ENCODE measurements at regions of chr9 and their contacts with region 1.

Region 1: GRCh38 chr9:124309665-124310064 is 51.9 kb downstream of the NEK6 start:
- DNase-seq: no peak
- H3K4me3 ChIP-seq: no peak overlapping the region
- H3K27ac ChIP-seq: no peak overlapping the region
- H3K4me1 ChIP-seq: no peaks in the 10 kb centered on the region
- H3K27me3 ChIP-seq: no peaks in the 10 kb centered on the region
- CTCF ChIP-seq: no peak
- EP300 ChIP-seq: no peak
- POLR2A ChIP-seq: no peak

Region 2: GRCh38 chr9:122918310-122918709 is 1391.4 kb before region 1 on chr9:
- in situ Hi-C with region 1: no loop called
- intact Hi-C with region 1: loop called (anchors 5 kb)
- DNase-seq: no peak
- H3K4me3 ChIP-seq: no peak overlapping the region
- H3K27ac ChIP-seq: no peak overlapping the region
- H3K4me1 ChIP-seq: peaks cover 0 to 4% (median 2%) of the 10 kb centered on the region in 4 donors
- H3K27me3 ChIP-seq: no peaks in the 10 kb centered on the region
- CTCF ChIP-seq: no peak
- EP300 ChIP-seq: no peak
- POLR2A ChIP-seq: no peak

Region 3: GRCh38 chr9:124126571-124127289 is 182.9 kb before region 1 on chr9:
- in situ Hi-C with region 1: loop called (anchors 10 kb)
- intact Hi-C with region 1: no loop called
- DNase-seq: peak; percentile 80
- H3K4me3 ChIP-seq: no peak overlapping the region
- H3K27ac ChIP-seq: no peak overlapping the region
- H3K4me1 ChIP-seq: no peaks in the 10 kb centered on the region
- H3K27me3 ChIP-seq: no peaks in the 10 kb centered on the region
- CTCF ChIP-seq: peak; percentile 96 to 99 (median 98)
- EP300 ChIP-seq: no peak
- POLR2A ChIP-seq: no peak

Region 4: GRCh38 chr9:124133727-124134126 is 175.9 kb before region 1 on chr9:
- in situ Hi-C with region 1: loop called (anchors 10 kb)
- intact Hi-C with region 1: no loop called
- DNase-seq: peak; percentile 59
- H3K4me3 ChIP-seq: no peak overlapping the region
- H3K27ac ChIP-seq: no peak overlapping the region
- H3K4me1 ChIP-seq: no peaks in the 10 kb centered on the region
- H3K27me3 ChIP-seq: no peaks in the 10 kb centered on the region
- CTCF ChIP-seq: peak; percentile 8 to 63 (median 49)
- EP300 ChIP-seq: no peak
- POLR2A ChIP-seq: no peak

Region 5: DNA sequence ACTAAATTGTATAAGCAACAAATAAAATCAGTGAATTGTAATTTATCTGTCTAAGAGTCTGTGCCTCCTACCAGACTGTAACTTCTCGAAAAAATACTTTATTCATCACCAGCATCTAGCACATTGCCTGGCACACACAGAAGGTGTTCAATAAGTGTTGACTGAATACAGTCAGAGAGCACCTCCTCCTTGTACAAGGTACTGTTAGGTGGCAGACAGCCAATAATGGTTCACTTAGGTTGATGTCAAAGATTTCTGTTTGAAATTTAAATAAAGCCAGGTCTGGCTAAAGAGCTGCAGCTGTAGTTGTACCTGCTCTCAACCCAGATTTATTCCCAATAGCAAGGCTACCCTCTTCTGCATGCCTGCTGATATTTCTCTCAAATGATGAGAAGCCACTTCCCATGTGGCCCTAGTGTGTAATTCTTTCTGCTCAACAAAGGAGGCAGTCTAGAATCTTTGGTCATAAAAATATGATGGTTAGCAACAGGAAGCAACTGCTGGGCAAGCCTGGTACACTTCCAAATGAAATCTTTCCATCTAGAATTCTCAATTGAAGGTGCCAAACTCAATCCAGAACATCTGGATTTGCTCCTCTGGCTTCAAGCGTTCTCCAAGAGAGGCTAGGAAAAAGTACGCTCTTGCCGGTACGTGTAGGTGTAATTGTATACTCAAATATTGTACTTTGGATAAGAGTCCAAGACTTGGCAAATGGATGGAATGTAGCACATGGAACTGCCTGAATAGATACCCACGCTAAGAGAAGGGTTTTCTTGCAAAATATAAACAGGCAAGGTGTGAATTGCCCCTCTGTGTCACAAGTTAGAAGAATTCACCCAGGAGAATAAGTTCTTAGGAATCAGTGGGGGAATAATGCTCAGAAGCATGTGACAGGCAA is 365.8 kb after region 1 on chr9:
- in situ Hi-C with region 1: no loop called
- intact Hi-C with region 1: no loop called
- DNase-seq: no peak
- H3K4me3 ChIP-seq: no peak overlapping the region
- H3K27ac ChIP-seq: peak overlapping the region in 3 of 4 donors; percentile 21 to 43 (median 38)
- H3K4me1 ChIP-seq: peaks cover 0 to 16% (median 5%) of the 10 kb centered on the region in 4 donors
- H3K27me3 ChIP-seq: no peaks in the 10 kb centered on the region
- CTCF ChIP-seq: peak in 1 of 5 experiments; percentile 6
- EP300 ChIP-seq: no peak
- POLR2A ChIP-seq: no peak